Activated CD4-positive, alpha-beta memory T cell treated with anti-CD3 and anti-CD28 coated beads for 36 hours (primary cell): ENCODE measurements at regions of chrX and their contacts with region 1.

Region 1: DNA sequence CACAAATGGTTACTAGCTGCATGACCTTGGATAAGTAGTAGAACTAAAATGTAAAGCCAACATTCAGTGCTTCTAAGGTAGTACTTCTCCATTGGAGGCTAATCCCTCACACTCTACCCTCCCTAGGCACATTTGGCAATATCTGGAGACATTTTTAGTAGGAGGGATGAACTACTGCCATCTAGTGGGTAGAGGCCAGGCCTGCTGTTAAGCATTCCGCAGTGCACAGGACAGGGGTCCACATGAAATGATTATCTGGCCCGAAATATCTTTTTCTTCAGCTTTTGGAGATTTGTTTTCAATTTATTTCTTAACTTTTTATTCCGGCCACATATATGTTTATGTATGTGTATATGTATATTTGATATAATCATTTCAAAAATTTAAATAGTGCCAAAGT is 36.0 kb upstream of the SPANXC start:
- DNase-seq: peak; percentile 9
- H3K4me3 Mint-ChIP-seq: no peak overlapping the region
- H3K27ac Mint-ChIP-seq: no peak overlapping the region
- H3K4me1 Mint-ChIP-seq: no peaks in the 10 kb centered on the region
- H3K27me3 Mint-ChIP-seq: no peaks in the 10 kb centered on the region

Region 2: DNA sequence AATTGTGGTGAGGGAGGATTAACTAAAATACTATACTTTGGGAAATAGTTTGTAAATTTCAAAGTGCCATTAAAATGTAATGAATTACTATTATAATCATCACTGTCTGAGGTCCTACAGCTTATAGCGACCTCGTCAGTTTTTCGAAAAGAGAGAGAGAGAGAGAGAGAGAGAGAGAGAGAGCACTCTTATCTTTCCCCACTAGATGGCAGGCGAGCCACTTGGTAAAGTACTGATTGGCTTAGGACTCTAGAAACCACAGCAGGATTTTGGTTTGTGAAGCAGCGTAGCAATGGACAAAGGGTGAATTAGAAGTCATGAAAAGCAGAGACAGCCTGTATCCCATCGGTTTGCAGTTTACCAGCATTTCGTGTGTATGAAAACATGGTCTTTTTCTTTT is 516.2 kb before region 1 on chrX:
- CTCF ChIA-PET with region 1: interaction called, 36 read pairs
- POLR2A ChIA-PET with region 1: no interaction called
- intact Hi-C with region 1: loop called (anchors 2 kb)
- DNase-seq: peak; percentile 38
- H3K4me3 Mint-ChIP-seq: no peak overlapping the region
- H3K27ac Mint-ChIP-seq: no peak overlapping the region
- H3K4me1 Mint-ChIP-seq: peaks cover 6% of the 10 kb centered on the region
- H3K27me3 Mint-ChIP-seq: peaks cover 5% of the 10 kb centered on the region

Region 3: DNA sequence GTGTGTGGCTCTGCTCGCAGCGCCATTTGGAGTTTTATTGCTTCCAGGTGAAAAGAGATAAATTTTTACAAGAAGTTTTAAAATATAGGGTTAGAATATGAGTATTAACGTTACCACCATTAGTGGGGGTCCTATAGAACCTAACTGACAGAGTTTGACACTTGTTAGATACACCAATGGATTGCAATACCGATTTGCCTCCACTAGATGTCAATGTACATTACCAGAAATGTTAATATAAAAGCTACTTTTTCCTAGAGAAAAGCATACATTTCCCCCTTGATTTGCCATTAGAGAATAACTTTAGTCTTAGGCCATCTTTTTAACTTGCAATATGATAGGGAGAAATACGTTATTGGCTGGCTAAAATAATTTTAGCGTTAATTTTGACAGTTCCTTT is 460.4 kb before region 1 on chrX:
- CTCF ChIA-PET with region 1: interaction called, 14 read pairs
- POLR2A ChIA-PET with region 1: no interaction called
- intact Hi-C with region 1: loop called (anchors 2 kb)
- DNase-seq: no peak
- H3K4me3 Mint-ChIP-seq: no peak overlapping the region
- H3K27ac Mint-ChIP-seq: no peak overlapping the region
- H3K4me1 Mint-ChIP-seq: peaks cover 9% of the 10 kb centered on the region
- H3K27me3 Mint-ChIP-seq: no peaks in the 10 kb centered on the region